ENCODE measurements at regions of chrX and their contacts with region 1.

Region 1: GRCh38 chrX:136909706-136910564 is 29.4 kb upstream of the RBMX start:
- DNase-seq: peak; percentile 51
- H3K4me3 Mint-ChIP-seq: peak overlapping the region; percentile 95
- H3K27ac Mint-ChIP-seq: peak overlapping the region; percentile 88
- H3K4me1 Mint-ChIP-seq: peaks cover 23% of the 10 kb centered on the region
- H3K27me3 Mint-ChIP-seq: no peaks in the 10 kb centered on the region

Region 2: GRCh38 chrX:136880452-136881013 is 29.4 kb before region 1 on chrX and contains the start of gene RBMX:
- intact Hi-C with region 1: loop called (anchors 1 kb)
- DNase-seq: peak; percentile 84
- H3K4me3 Mint-ChIP-seq: peak within 1 kb of the TSS; percentile 98
- H3K27ac Mint-ChIP-seq: peak within 1 kb of the TSS; percentile 99
- H3K4me1 Mint-ChIP-seq: peaks cover 6% of the 10 kb centered on the region
- H3K27me3 Mint-ChIP-seq: no peaks in the 10 kb centered on the region
- total RNA-seq, gene RBMX: 308 and 327 TPM in 2 replicates

Measured in activated T-helper 1 cell treated with anti-CD3 and anti-CD28 coated beads, Interleukin-12 subunit alpha, Interleukin-12 subunit beta, Interleukin-2, Interleukin-4 antibody, amounts not matched to agents 30 ng/mL and 10 ng/mL and 1 ng/mL, durations not matched to agents 14 hours and 24 hours and 36 hours (primary cell).